ENCODE measurements at regions of chr17 and their contacts with region 1.

Region 1: GRCh38 chr17:66301797-66302741 is at the start of gene PRKCA:
- DNase-seq: peak; percentile 44 to 88 (median 69)
- ATAC-seq: peak; percentile 73
- H3K4me3 ChIP-seq: peak within 1 kb of the TSS; percentile 67 to 78
- H3K4me3 Mint-ChIP-seq: peak within 1 kb of the TSS; percentile 99
- H3K27ac ChIP-seq: peak within 1 kb of the TSS; percentile 19 to 49
- H3K27ac Mint-ChIP-seq: peak within 1 kb of the TSS; percentile 95
- H3K4me1 ChIP-seq: peaks cover 25% of the 10 kb centered on the region
- H3K4me1 Mint-ChIP-seq: peaks cover 53% of the 10 kb centered on the region
- H3K27me3 ChIP-seq: no peaks in the 10 kb centered on the region
- H3K27me3 Mint-ChIP-seq: no peaks in the 10 kb centered on the region
- CTCF ChIP-seq: no peak
- total RNA-seq, gene PRKCA: 62.6 to 70.8 TPM

Region 2: DNA sequence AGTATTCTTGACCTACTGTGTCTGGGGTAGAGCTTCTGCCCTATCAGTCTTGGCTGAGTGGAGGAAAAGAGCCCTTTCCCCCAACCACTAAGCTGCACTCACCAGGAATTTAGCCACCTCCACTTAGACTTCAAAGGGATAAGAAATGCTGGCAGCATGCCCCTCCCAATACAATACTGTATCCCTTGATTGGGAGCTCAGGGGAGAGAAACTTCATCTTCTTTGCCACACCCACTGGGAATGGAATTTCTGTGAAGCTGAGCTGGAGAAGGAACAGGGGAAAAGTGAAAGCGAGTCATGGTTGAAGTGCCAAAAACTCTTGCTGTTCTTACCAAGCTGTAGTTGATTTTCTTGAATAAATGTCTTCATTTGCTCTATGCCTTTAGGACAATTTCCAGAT is 178.9 kb before region 1 on chr17:
- CTCF ChIA-PET with region 1: no interaction called
- POLR2A ChIA-PET with region 1: no interaction called
- intact Hi-C with region 1: no loop called
- DNase-seq: no peak
- ATAC-seq: no peak
- H3K4me3 ChIP-seq: no peak overlapping the region
- H3K4me3 Mint-ChIP-seq: no peak overlapping the region
- H3K27ac ChIP-seq: no peak overlapping the region
- H3K27ac Mint-ChIP-seq: no peak overlapping the region
- H3K4me1 ChIP-seq: no peaks in the 10 kb centered on the region
- H3K4me1 Mint-ChIP-seq: no peaks in the 10 kb centered on the region
- H3K27me3 ChIP-seq: no peaks in the 10 kb centered on the region
- H3K27me3 Mint-ChIP-seq: peaks cover 3% of the 10 kb centered on the region
- CTCF ChIP-seq: no peak

Region 3: DNA sequence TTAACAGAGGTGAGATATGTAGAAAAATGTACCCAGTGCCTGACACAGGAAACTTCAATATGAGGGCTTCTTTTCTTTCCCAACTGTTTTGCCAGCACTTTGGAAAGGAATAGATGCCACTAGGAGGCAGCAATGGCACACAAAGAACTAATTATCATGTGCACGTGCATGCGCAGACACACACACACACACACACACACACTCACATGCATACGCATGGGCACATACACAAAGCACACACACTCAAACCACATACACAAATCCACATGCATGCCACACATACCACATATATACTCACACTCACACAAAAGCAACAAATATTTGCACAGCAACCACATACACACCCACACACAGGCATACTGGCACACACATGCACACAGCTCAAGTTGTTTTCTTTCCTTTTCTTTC is 101.4 kb before region 1 on chr17:
- CTCF ChIA-PET with region 1: interaction called, 3 read pairs
- POLR2A ChIA-PET with region 1: no interaction called
- intact Hi-C with region 1: loop called in 1 of 2 experiments (anchors 5 kb)
- DNase-seq: peak in 8 of 9 experiments; percentile 3 to 74 (median 28)
- ATAC-seq: peak; percentile 42
- H3K4me3 ChIP-seq: no peak overlapping the region
- H3K4me3 Mint-ChIP-seq: no peak overlapping the region
- H3K27ac ChIP-seq: no peak overlapping the region
- H3K27ac Mint-ChIP-seq: no peak overlapping the region
- H3K4me1 ChIP-seq: peaks cover 18% of the 10 kb centered on the region
- H3K4me1 Mint-ChIP-seq: peaks cover 19% of the 10 kb centered on the region
- H3K27me3 ChIP-seq: no peaks in the 10 kb centered on the region
- H3K27me3 Mint-ChIP-seq: no peaks in the 10 kb centered on the region
- CTCF ChIP-seq: peak; percentile 33

Region 4: DNA sequence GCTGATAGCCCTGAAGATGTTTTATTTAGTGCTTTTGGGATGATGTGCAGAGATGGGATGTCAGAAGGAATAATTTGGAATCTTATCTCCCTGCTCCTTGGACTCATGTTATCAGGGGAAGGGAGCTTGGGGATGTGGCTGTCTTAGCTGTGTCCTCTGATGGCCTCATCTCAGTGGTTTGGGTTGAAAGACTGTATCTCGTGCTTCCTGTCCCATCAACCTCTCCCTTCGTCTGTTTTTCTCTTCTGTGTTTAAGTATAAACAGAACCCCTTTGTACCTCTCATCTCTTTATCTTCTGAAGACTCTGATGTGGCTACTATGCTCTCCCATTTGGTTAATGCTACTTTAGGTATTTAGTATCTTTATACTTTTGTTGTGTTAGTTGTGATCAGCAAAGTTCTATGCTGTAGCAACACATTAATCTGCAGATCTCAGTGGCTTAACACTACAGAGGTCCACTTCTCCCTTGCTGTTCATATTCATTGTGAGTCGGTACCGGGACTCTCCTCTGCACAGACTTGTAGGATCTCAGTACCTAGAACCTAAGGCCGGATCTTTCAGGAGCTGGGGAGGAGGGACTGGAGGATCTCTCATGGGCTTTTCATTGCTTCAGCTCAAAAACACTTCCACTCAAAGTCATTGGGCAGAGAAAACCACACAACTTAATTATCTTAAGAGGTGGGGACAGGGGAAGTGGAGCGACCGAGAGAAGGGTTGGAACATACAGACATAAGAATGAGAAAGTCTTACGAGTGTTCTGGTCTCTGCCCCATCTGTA is 29.2 kb after region 1 on chr17:
- CTCF ChIA-PET with region 1: interaction called, 3 read pairs
- POLR2A ChIA-PET with region 1: interaction called, 15 read pairs
- intact Hi-C with region 1: loop called in 1 of 2 experiments (anchors 2 kb)
- DNase-seq: peak in 8 of 9 experiments; percentile 7 to 80 (median 34)
- ATAC-seq: peak; percentile 74
- H3K4me3 ChIP-seq: peak overlapping the region; percentile 15 to 21
- H3K4me3 Mint-ChIP-seq: peak overlapping the region; percentile 81
- H3K27ac ChIP-seq: peak overlapping the region; percentile 42 to 55
- H3K27ac Mint-ChIP-seq: peak overlapping the region; percentile 95
- H3K4me1 ChIP-seq: peaks cover 82% of the 10 kb centered on the region
- H3K4me1 Mint-ChIP-seq: peaks cover 82% of the 10 kb centered on the region
- H3K27me3 ChIP-seq: no peaks in the 10 kb centered on the region
- H3K27me3 Mint-ChIP-seq: no peaks in the 10 kb centered on the region
- CTCF ChIP-seq: no peak

Region 5: GRCh38 chr17:66397486-66397885 is 95.4 kb after region 1 on chr17:
- CTCF ChIA-PET with region 1: no interaction called
- POLR2A ChIA-PET with region 1: interaction called, 9 read pairs
- intact Hi-C with region 1: loop called in 1 of 2 experiments (anchors 2 kb)
- DNase-seq: peak in 2 of 9 experiments; percentile 22 to 32
- ATAC-seq: peak; percentile 30
- H3K4me3 ChIP-seq: no peak overlapping the region
- H3K4me3 Mint-ChIP-seq: peak overlapping the region; percentile 33
- H3K27ac ChIP-seq: peak overlapping the region in 1 of 2 experiments; percentile 37
- H3K27ac Mint-ChIP-seq: peak overlapping the region; percentile 90
- H3K4me1 ChIP-seq: peaks cover 87% of the 10 kb centered on the region
- H3K4me1 Mint-ChIP-seq: peaks cover 77% of the 10 kb centered on the region
- H3K27me3 ChIP-seq: no peaks in the 10 kb centered on the region
- H3K27me3 Mint-ChIP-seq: no peaks in the 10 kb centered on the region
- CTCF ChIP-seq: no peak

Region 6: GRCh38 chr17:68277807-68278206 is 1975.7 kb after region 1 on chr17:
- CTCF ChIA-PET with region 1: no interaction called
- POLR2A ChIA-PET with region 1: no interaction called
- intact Hi-C with region 1: loop called in 1 of 2 experiments (anchors 5 kb)
- DNase-seq: no peak
- ATAC-seq: no peak
- H3K4me3 ChIP-seq: no peak overlapping the region
- H3K4me3 Mint-ChIP-seq: no peak overlapping the region
- H3K27ac ChIP-seq: no peak overlapping the region
- H3K27ac Mint-ChIP-seq: no peak overlapping the region
- H3K4me1 ChIP-seq: no peaks in the 10 kb centered on the region
- H3K4me1 Mint-ChIP-seq: peaks cover 14% of the 10 kb centered on the region
- H3K27me3 ChIP-seq: no peaks in the 10 kb centered on the region
- H3K27me3 Mint-ChIP-seq: no peaks in the 10 kb centered on the region
- CTCF ChIP-seq: no peak